Activated CD8-positive, alpha-beta T cell treated with anti-CD3 and anti-CD28 coated beads for 36 hours (primary cell): ENCODE measurements at regions of chr2 and their contacts with region 1.

Region 1: GRCh38 chr2:156332534-156333273 is at the start of gene NR4A2:
- DNase-seq: peak; percentile 96
- ATAC-seq: peak; percentile 56
- H3K4me3 Mint-ChIP-seq: peak within 1 kb of the TSS; percentile 82
- H3K27ac Mint-ChIP-seq: peak within 1 kb of the TSS; percentile 98
- H3K4me1 Mint-ChIP-seq: peaks cover 43% of the 10 kb centered on the region
- H3K27me3 Mint-ChIP-seq: no peaks in the 10 kb centered on the region
- CTCF ChIP-seq: no peak
- total RNA-seq, gene NR4A2: 57.6 to 61.6 TPM

Region 2: GRCh38 chr2:156385242-156385641 is 52.5 kb after region 1 on chr2:
- CTCF ChIA-PET with region 1: interaction called, 19 read pairs
- POLR2A ChIA-PET with region 1: interaction called, 5 read pairs
- intact Hi-C with region 1: no loop called
- DNase-seq: peak; percentile 59
- ATAC-seq: peak; percentile 86
- H3K4me3 Mint-ChIP-seq: peak overlapping the region; percentile 26
- H3K27ac Mint-ChIP-seq: peak overlapping the region; percentile 87
- H3K4me1 Mint-ChIP-seq: peaks cover 31% of the 10 kb centered on the region
- H3K27me3 Mint-ChIP-seq: no peaks in the 10 kb centered on the region
- CTCF ChIP-seq: no peak

Region 3: GRCh38 chr2:156400706-156401678 is 68.3 kb after region 1 on chr2:
- CTCF ChIA-PET with region 1: interaction called, 26 read pairs
- POLR2A ChIA-PET with region 1: interaction called, 22 read pairs
- intact Hi-C with region 1: loop called (anchors 2 kb)
- DNase-seq: peak; percentile 85
- ATAC-seq: peak; percentile 73
- H3K4me3 Mint-ChIP-seq: peak overlapping the region; percentile 80
- H3K27ac Mint-ChIP-seq: peak overlapping the region; percentile 91
- H3K4me1 Mint-ChIP-seq: peaks cover 22% of the 10 kb centered on the region
- H3K27me3 Mint-ChIP-seq: peaks cover 2% of the 10 kb centered on the region
- CTCF ChIP-seq: no peak

Region 4: GRCh38 chr2:156526950-156527636 is 194.4 kb after region 1 on chr2:
- CTCF ChIA-PET with region 1: no interaction called
- POLR2A ChIA-PET with region 1: no interaction called
- intact Hi-C with region 1: no loop called
- DNase-seq: no peak
- ATAC-seq: peak; percentile 78
- H3K4me3 Mint-ChIP-seq: no peak overlapping the region
- H3K27ac Mint-ChIP-seq: peak overlapping the region; percentile 34
- H3K4me1 Mint-ChIP-seq: peaks cover 10% of the 10 kb centered on the region
- H3K27me3 Mint-ChIP-seq: no peaks in the 10 kb centered on the region
- CTCF ChIP-seq: no peak

Region 5: GRCh38 chr2:156892467-156893281 is 560.0 kb after region 1 on chr2:
- CTCF ChIA-PET with region 1: no interaction called
- POLR2A ChIA-PET with region 1: no interaction called
- intact Hi-C with region 1: loop called (anchors 10 kb)
- DNase-seq: no peak
- ATAC-seq: peak; percentile 47
- H3K4me3 Mint-ChIP-seq: no peak overlapping the region
- H3K27ac Mint-ChIP-seq: no peak overlapping the region
- H3K4me1 Mint-ChIP-seq: peaks cover 11% of the 10 kb centered on the region
- H3K27me3 Mint-ChIP-seq: peaks cover 31% of the 10 kb centered on the region
- CTCF ChIP-seq: no peak